ENCODE measurements at regions of chr1 and their contacts with region 1.

Region 1: GRCh38 chr1:85200870-85201339 is at the start of gene SYDE2:
- DNase-seq: peak; percentile 76
- H3K4me3 Mint-ChIP-seq: peak within 1 kb of the TSS; percentile 98
- H3K27ac Mint-ChIP-seq: peak within 1 kb of the TSS; percentile 89
- H3K4me1 Mint-ChIP-seq: peaks cover 33% of the 10 kb centered on the region
- H3K27me3 Mint-ChIP-seq: no peaks in the 10 kb centered on the region
- total RNA-seq, gene SYDE2: 4.4 to 5.1 TPM

Region 2: GRCh38 chr1:84166797-84167196 is 1034.1 kb before region 1 on chr1:
- CTCF ChIA-PET with region 1: no interaction called
- intact Hi-C with region 1: loop called (anchors 10 kb)
- DNase-seq: no peak
- H3K4me3 Mint-ChIP-seq: no peak overlapping the region
- H3K27ac Mint-ChIP-seq: no peak overlapping the region
- H3K4me1 Mint-ChIP-seq: peaks cover 72% of the 10 kb centered on the region
- H3K27me3 Mint-ChIP-seq: no peaks in the 10 kb centered on the region

Region 3: GRCh38 chr1:84344286-84344685 is 856.6 kb before region 1 on chr1:
- CTCF ChIA-PET with region 1: no interaction called
- intact Hi-C with region 1: no loop called
- DNase-seq: no peak
- H3K4me3 Mint-ChIP-seq: no peak overlapping the region
- H3K27ac Mint-ChIP-seq: no peak overlapping the region
- H3K4me1 Mint-ChIP-seq: no peaks in the 10 kb centered on the region
- H3K27me3 Mint-ChIP-seq: no peaks in the 10 kb centered on the region

Region 4: DNA sequence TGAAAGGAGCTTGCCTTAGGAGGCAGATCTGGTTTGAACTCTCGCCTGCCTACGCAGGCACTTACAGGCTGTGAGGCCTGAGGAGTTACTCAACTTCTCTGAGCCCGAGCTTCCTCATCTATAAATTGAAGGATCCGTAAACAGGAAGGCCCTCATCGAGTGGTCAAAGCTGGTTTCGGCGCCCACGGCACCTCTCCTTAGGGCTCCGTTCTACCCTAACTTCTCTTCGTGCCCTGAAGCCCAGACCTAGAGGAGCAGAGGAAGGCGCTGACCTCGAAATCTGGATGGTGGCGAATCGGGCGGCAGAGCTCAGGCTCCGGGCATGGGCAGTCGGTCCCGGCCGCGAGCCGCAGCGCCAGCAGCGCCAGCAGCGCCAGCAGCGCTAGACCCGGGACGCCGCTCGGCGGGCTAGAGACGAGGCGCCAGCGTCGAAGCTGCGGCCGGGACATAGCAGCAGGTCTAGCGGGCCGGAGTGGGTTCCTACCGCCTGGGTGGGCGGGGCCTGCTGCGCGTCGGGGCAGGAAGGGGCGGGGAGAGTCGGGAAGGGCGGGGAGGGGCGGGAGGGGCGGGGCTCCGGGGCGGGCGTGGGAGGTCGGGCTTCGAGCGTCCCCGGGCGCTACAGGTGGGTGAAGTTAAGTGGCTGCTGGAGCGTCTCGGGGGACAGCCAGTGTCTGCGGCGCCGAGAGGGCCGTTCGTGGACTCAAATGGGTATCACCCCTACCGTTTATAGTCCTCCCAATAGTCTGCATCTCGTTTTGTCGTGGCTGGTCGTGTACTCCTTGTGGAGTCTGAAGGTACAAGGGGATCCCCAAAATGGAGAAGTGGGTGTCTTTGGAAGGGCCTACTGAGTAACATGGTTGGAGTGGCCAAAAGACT is 626.7 kb before region 1 on chr1 and contains the start of gene CTBS:
- CTCF ChIA-PET with region 1: no interaction called
- intact Hi-C with region 1: loop called (anchors 1 kb)
- DNase-seq: peak; percentile 86
- H3K4me3 Mint-ChIP-seq: peak within 1 kb of the TSS; percentile 95
- H3K27ac Mint-ChIP-seq: peak within 1 kb of the TSS; percentile 98
- H3K4me1 Mint-ChIP-seq: peaks cover 28% of the 10 kb centered on the region
- H3K27me3 Mint-ChIP-seq: no peaks in the 10 kb centered on the region
- total RNA-seq, gene CTBS: 21.1 to 21.2 TPM

Region 5: GRCh38 chr1:85061711-85062424 is 139.0 kb before region 1 on chr1:
- CTCF ChIA-PET with region 1: no interaction called
- intact Hi-C with region 1: loop called (anchors 2 kb)
- DNase-seq: peak; percentile 93
- H3K4me3 Mint-ChIP-seq: peak overlapping the region; percentile 82
- H3K27ac Mint-ChIP-seq: peak overlapping the region; percentile 60
- H3K4me1 Mint-ChIP-seq: peaks cover 10% of the 10 kb centered on the region
- H3K27me3 Mint-ChIP-seq: no peaks in the 10 kb centered on the region

Region 6: GRCh38 chr1:85259118-85259911 is 58.4 kb after region 1 on chr1 and contains the start of gene C1orf52:
- CTCF ChIA-PET with region 1: interaction called, 14 read pairs
- intact Hi-C with region 1: loop called (anchors 1 kb)
- DNase-seq: peak; percentile 97
- H3K4me3 Mint-ChIP-seq: peak within 1 kb of the TSS; percentile 96
- H3K27ac Mint-ChIP-seq: peak within 1 kb of the TSS; percentile 89
- H3K4me1 Mint-ChIP-seq: peaks cover 38% of the 10 kb centered on the region
- H3K27me3 Mint-ChIP-seq: no peaks in the 10 kb centered on the region
- total RNA-seq, gene C1orf52: 28.3 to 29.5 TPM

Region 7: GRCh38 chr1:86395771-86396497 is 1195.0 kb after region 1 on chr1 and contains the start of gene ODF2L:
- CTCF ChIA-PET with region 1: no interaction called
- intact Hi-C with region 1: loop called (anchors 10 kb)
- DNase-seq: peak; percentile 94
- H3K4me3 Mint-ChIP-seq: peak within 1 kb of the TSS; percentile 95
- H3K27ac Mint-ChIP-seq: peak within 1 kb of the TSS; percentile 91
- H3K4me1 Mint-ChIP-seq: peaks cover 44% of the 10 kb centered on the region
- H3K27me3 Mint-ChIP-seq: no peaks in the 10 kb centered on the region
- total RNA-seq, gene ODF2L: 17.8 to 18.0 TPM

Measured in activated naive CD4-positive, alpha-beta T cell treated with anti-CD3 and anti-CD28 coated beads for 36 hours (primary cell).